GM12878 (cell line): ENCODE measurements at regions of chr16 and their contacts with region 1.

Region 1: DNA sequence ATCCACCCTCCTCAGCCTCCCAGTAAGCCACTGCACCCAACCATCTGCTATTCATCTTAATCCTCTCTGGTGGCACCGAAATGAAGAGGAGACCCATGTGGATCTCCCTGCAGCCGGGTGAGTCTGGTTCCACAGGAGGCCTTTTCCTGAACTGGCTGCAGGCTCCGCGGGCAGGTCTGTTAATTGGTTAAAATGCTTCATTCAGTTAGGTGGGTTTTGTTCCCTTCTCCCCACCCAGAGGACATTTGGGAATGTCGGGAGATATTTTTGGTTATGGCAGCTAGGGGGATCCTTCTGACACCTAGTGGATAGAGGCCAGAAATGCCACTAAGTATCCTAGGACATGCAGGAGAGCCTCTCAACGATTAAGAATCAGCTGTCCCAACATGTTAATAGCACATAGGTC is 16.7 kb downstream of the C16orf54 start:
- DNase-seq: no peak
- ATAC-seq: no peak
- H3K4me3 ChIP-seq: no peak overlapping the region
- H3K27ac ChIP-seq: no peak overlapping the region
- H3K4me1 ChIP-seq: peaks cover 17% of the 10 kb centered on the region
- H3K27me3 ChIP-seq: no peaks in the 10 kb centered on the region
- CTCF ChIP-seq: peak; percentile 44 to 56 (median 54); a peak in 5 of 6 replicates
- EP300 ChIP-seq: no peak
- POLR2A ChIP-seq: no peak
- RAD21 ChIP-seq: peak; percentile 36

Region 2: GRCh38 chr16:29645694-29646187 is 83.4 kb before region 1 on chr16:
- CTCF ChIA-PET with region 1: interaction called, 32 read pairs
- POLR2A ChIA-PET with region 1: interaction called, 3 read pairs
- RAD21 ChIA-PET with region 1: interaction called, 4 read pairs
- SMC1A ChIA-PET with region 1: interaction called, 5 read pairs
- in situ Hi-C with region 1: no loop called
- intact Hi-C with region 1: no loop called
- DNase-seq: peak; percentile 83
- ATAC-seq: peak; percentile 77
- H3K4me3 ChIP-seq: no peak overlapping the region
- H3K27ac ChIP-seq: peak overlapping the region; percentile 90
- H3K4me1 ChIP-seq: peaks cover 45% of the 10 kb centered on the region
- H3K27me3 ChIP-seq: no peaks in the 10 kb centered on the region
- CTCF ChIP-seq: no peak
- EP300 ChIP-seq: no peak
- POLR2A ChIP-seq: peak; percentile 52
- RAD21 ChIP-seq: no peak

Region 3: GRCh38 chr16:29745853-29746345 is 16.8 kb after region 1 on chr16 and contains the start of gene C16orf54:
- CTCF ChIA-PET with region 1: interaction called, 5 read pairs
- POLR2A ChIA-PET with region 1: interaction called, 20 read pairs
- RAD21 ChIA-PET with region 1: interaction called, 9 read pairs
- SMC1A ChIA-PET with region 1: interaction called, 4 read pairs
- in situ Hi-C with region 1: no loop called
- intact Hi-C with region 1: no loop called
- DNase-seq: peak; percentile 89
- ATAC-seq: peak; percentile 95
- H3K4me3 ChIP-seq: peak within 1 kb of the TSS; percentile 62
- H3K27ac ChIP-seq: peak within 1 kb of the TSS; percentile 90
- H3K4me1 ChIP-seq: peaks cover 39% of the 10 kb centered on the region
- H3K27me3 ChIP-seq: no peaks in the 10 kb centered on the region
- CTCF ChIP-seq: no peak
- EP300 ChIP-seq: peak; percentile 59 to 87; a peak in 1 of 4 replicates
- POLR2A ChIP-seq: peak; percentile 71; the same call in 1 of the 2 replicates
- RAD21 ChIP-seq: no peak
- polyA plus RNA-seq, gene C16orf54: 2.1 to 2.4 TPM

Region 4: GRCh38 chr16:29784901-29785500 is 55.9 kb after region 1 on chr16:
- CTCF ChIA-PET with region 1: interaction called, 32 read pairs
- POLR2A ChIA-PET with region 1: interaction called, 6 read pairs
- RAD21 ChIA-PET with region 1: interaction called, 8 read pairs
- SMC1A ChIA-PET with region 1: interaction called, 5 read pairs
- in situ Hi-C with region 1: loop called (anchors 5 kb)
- intact Hi-C with region 1: no loop called
- DNase-seq: no peak
- ATAC-seq: peak; percentile 89
- H3K4me3 ChIP-seq: peak overlapping the region; percentile 15; the same call in 1 of the 2 replicates
- H3K27ac ChIP-seq: no peak overlapping the region
- H3K4me1 ChIP-seq: peaks cover 13% of the 10 kb centered on the region
- H3K27me3 ChIP-seq: no peaks in the 10 kb centered on the region
- CTCF ChIP-seq: peak; percentile 63 to 84 (median 82)
- EP300 ChIP-seq: no peak
- POLR2A ChIP-seq: 0 out of 2 replicates have a peak, but pooled peaks have one; percentile 36
- RAD21 ChIP-seq: peak; percentile 60

Region 5: DNA sequence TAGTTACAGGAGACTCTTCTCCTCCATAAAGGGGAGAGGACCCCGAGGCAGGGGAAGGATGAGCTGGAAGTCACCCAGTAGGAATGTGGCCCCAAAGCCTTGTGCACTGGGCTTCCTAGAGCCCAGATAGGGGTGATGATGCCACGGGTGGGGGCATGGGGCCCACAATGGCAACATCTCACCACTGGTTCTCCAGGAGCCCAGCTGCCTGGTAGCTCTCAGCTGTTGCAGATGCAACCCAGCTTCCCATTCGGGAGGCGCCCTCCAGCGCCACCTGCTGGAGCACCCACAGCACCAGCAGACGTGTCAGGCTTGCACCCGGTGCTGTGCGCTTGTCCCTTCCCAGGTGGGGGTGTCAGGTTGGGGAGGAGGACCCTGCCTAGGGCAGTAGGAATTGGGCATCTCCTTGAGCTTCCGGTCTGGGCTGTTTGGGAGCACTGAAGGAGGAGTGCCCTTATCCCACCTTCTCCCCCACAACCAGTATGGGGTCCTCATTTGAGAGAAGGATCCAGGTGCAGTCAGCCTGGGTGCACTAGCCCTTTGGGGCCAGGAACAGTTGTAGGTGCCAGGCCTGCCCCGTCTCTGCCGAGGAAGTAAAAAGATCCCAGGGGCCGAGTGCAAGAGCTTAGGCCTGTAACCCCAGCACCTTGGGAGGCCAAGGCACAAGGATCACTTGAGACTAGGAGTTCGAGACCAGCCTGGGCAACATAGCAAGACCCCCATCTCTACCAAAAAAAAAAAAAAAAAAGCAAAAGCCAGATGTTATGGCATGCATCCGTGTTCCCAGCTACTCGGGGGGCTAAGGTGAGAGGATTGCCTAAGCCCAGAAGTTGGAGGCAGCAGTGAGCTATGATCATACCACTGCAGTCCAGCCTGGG is 119.5 kb after region 1 on chr16:
- CTCF ChIA-PET with region 1: interaction called, 12 read pairs
- POLR2A ChIA-PET with region 1: interaction called, 3 read pairs
- RAD21 ChIA-PET with region 1: interaction called, 5 read pairs
- SMC1A ChIA-PET with region 1: interaction called, 4 read pairs
- in situ Hi-C with region 1: no loop called
- intact Hi-C with region 1: no loop called
- DNase-seq: no peak
- ATAC-seq: peak; percentile 99
- H3K4me3 ChIP-seq: no peak overlapping the region
- H3K27ac ChIP-seq: no peak overlapping the region
- H3K4me1 ChIP-seq: no peaks in the 10 kb centered on the region
- H3K27me3 ChIP-seq: no peaks in the 10 kb centered on the region
- CTCF ChIP-seq: peak; percentile 88 to 98 (median 90)
- EP300 ChIP-seq: no peak
- POLR2A ChIP-seq: peak; percentile 51
- RAD21 ChIP-seq: peak; percentile 76